ENCODE measurements at regions of chr5 and their contacts with region 1.

Region 1: DNA sequence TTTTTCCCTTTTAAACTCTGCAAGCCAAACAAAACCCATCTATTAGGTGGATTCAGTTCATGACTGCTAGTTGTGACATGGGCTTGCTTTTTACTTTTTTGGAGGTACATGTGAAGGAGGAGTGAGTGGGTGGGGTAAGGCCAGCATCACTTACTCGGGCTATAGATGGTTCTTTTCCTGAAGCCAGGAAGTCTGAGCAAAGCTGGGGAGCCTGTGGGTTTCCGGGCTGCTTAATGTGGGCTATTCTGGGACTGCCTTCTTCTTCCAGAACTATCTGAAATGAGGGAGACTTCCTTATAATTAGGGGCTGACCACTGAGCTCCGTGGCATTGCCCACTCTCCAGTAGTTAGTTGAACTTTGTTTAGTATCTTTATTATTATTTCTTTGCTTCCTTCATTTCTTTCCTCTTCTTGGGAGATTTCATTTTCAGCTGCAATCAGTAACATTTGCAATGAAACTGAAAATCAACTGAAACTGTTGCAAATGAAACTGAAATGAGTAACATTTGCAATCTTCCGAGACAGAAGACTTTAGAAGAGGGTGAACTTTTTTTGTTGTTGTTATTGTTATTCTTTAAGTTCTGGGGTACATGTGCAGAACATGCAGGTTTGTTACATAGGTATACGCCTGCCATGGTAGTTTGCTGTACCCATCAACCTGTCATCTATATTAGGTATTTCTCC is 204.9 kb downstream of the LRRC70 start:
- DNase-seq: no peak
- ATAC-seq: no peak
- H3K4me3 ChIP-seq: no peak overlapping the region
- H3K27ac ChIP-seq: no peak overlapping the region
- H3K4me1 ChIP-seq: no peaks in the 10 kb centered on the region
- H3K27me3 ChIP-seq: no peaks in the 10 kb centered on the region
- CTCF ChIP-seq: no peak
- POLR2A ChIP-seq: no peak

Region 2: GRCh38 chr5:62460578-62460983 is 322.9 kb before region 1 on chr5:
- intact Hi-C with region 1: loop called (anchors 10 kb)
- DNase-seq: no peak
- ATAC-seq: peak; percentile 65 to 73 (median 71)
- H3K4me3 ChIP-seq: no peak overlapping the region
- H3K27ac ChIP-seq: no peak overlapping the region
- H3K4me1 ChIP-seq: no peaks in the 10 kb centered on the region
- H3K27me3 ChIP-seq: no peaks in the 10 kb centered on the region
- CTCF ChIP-seq: peak; percentile 66 to 86 (median 84)
- POLR2A ChIP-seq: no peak

Region 3: GRCh38 chr5:62506659-62507460 is 276.7 kb before region 1 on chr5:
- intact Hi-C with region 1: no loop called
- DNase-seq: no peak
- ATAC-seq: no peak
- H3K4me3 ChIP-seq: no peak overlapping the region
- H3K27ac ChIP-seq: no peak overlapping the region
- H3K4me1 ChIP-seq: no peaks in the 10 kb centered on the region
- H3K27me3 ChIP-seq: no peaks in the 10 kb centered on the region
- CTCF ChIP-seq: no peak
- POLR2A ChIP-seq: no peak